Activated CD4-positive, alpha-beta T cell treated with anti-CD3 and anti-CD28 coated beads for 36 hours (primary cell): ENCODE measurements at regions of chr2 and their contacts with region 1.

Region 1: GRCh38 chr2:84732897-84733778 is 147.7 kb downstream of the TRABD2A start:
- DNase-seq: no peak
- ATAC-seq: no peak
- H3K4me3 Mint-ChIP-seq: no peak overlapping the region
- H3K27ac Mint-ChIP-seq: no peak overlapping the region
- H3K4me1 Mint-ChIP-seq: peaks cover 14% of the 10 kb centered on the region
- H3K27me3 Mint-ChIP-seq: no peaks in the 10 kb centered on the region

Region 2: GRCh38 chr2:84373391-84373790 is 359.7 kb before region 1 on chr2:
- CTCF ChIA-PET with region 1: no interaction called
- POLR2A ChIA-PET with region 1: no interaction called
- intact Hi-C with region 1: no loop called
- DNase-seq: no peak
- ATAC-seq: no peak
- H3K4me3 Mint-ChIP-seq: no peak overlapping the region
- H3K27ac Mint-ChIP-seq: no peak overlapping the region
- H3K4me1 Mint-ChIP-seq: no peaks in the 10 kb centered on the region
- H3K27me3 Mint-ChIP-seq: peaks cover 16% of the 10 kb centered on the region

Region 3: GRCh38 chr2:84694088-84694622 is 39.0 kb before region 1 on chr2:
- CTCF ChIA-PET with region 1: no interaction called
- POLR2A ChIA-PET with region 1: no interaction called
- intact Hi-C with region 1: loop called in 1 of 2 experiments (anchors 5 kb)
- DNase-seq: peak; percentile 28
- ATAC-seq: peak; percentile 63
- H3K4me3 Mint-ChIP-seq: peak overlapping the region; percentile 45
- H3K27ac Mint-ChIP-seq: peak overlapping the region; percentile 64
- H3K4me1 Mint-ChIP-seq: peaks cover 24% of the 10 kb centered on the region
- H3K27me3 Mint-ChIP-seq: no peaks in the 10 kb centered on the region

Region 4: GRCh38 chr2:85053802-85054201 is 320.7 kb after region 1 on chr2:
- CTCF ChIA-PET with region 1: no interaction called
- POLR2A ChIA-PET with region 1: no interaction called
- intact Hi-C with region 1: no loop called
- DNase-seq: peak; percentile 41
- ATAC-seq: peak; percentile 73
- H3K4me3 Mint-ChIP-seq: no peak overlapping the region
- H3K27ac Mint-ChIP-seq: no peak overlapping the region
- H3K4me1 Mint-ChIP-seq: peaks cover 37% of the 10 kb centered on the region
- H3K27me3 Mint-ChIP-seq: no peaks in the 10 kb centered on the region

Region 5: GRCh38 chr2:85741833-85742455 is 1008.8 kb after region 1 on chr2:
- CTCF ChIA-PET with region 1: no interaction called
- POLR2A ChIA-PET with region 1: no interaction called
- intact Hi-C with region 1: no loop called
- DNase-seq: no peak
- ATAC-seq: no peak
- H3K4me3 Mint-ChIP-seq: no peak overlapping the region
- H3K27ac Mint-ChIP-seq: no peak overlapping the region
- H3K4me1 Mint-ChIP-seq: no peaks in the 10 kb centered on the region
- H3K27me3 Mint-ChIP-seq: peaks cover 26% of the 10 kb centered on the region